ENCODE measurements at regions of chr7 and their contacts with region 1.

Region 1: GRCh38 chr7:101185258-101185839 is 5.3 kb upstream of the NAT16 start:
- DNase-seq: no peak
- H3K4me3 ChIP-seq: no peak overlapping the region
- H3K27ac ChIP-seq: no peak overlapping the region
- H3K4me1 ChIP-seq: peaks cover 8% of the 10 kb centered on the region
- CTCF ChIP-seq: no peak

Region 2: GRCh38 chr7:101169838-101170551 is 15.4 kb before region 1 on chr7:
- CTCF ChIA-PET with region 1: interaction called, 4 read pairs
- POLR2A ChIA-PET with region 1: interaction called, 12 read pairs
- intact Hi-C with region 1: no loop called
- DNase-seq: peak; percentile 69
- H3K4me3 ChIP-seq: no peak overlapping the region
- H3K27ac ChIP-seq: no peak overlapping the region
- H3K4me1 ChIP-seq: peaks cover 26% of the 10 kb centered on the region
- CTCF ChIP-seq: peak; percentile 91

Region 3: DNA sequence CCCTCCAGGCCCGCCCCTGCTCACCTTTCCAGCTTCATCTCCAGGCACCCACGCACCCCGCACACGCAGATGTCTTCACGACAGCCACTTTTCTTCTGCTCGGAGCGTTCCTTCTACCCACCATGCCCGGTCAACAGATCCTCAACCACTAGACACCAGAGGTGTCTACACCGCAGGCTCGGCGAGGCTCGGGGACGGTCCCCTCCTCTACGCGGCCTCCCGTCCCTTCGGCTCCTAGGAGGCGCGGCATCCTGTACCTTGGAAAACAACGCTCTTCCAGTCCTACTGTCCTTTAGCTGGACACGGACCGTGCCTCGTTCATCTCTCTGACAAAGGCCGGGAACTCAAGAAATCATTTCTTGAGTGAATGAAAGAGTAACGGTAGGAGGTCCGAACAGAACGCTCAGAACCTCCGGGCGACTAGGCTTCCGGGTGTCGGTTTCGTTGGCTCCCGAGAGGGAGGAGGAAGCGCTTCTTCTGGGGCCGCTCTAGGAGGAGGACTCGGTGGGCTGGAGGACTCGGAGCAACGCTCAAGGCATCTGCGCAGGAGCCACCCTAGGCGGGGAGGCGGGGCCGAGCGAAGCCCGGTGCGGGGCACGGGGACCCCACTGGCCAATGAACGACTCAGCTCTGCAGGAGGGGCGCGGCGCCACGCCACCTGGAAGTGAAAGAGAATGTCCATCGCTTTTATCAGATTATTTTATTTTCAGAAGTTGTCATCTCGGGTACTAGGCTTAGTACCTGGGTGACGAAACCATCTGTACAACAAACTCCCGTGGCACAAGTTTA is 66.7 kb after region 1 on chr7:
- CTCF ChIA-PET with region 1: no interaction called
- POLR2A ChIA-PET with region 1: no interaction called
- intact Hi-C with region 1: no loop called
- DNase-seq: peak; percentile 98
- H3K4me3 ChIP-seq: peak overlapping the region; percentile 83
- H3K27ac ChIP-seq: peak overlapping the region; percentile 30
- H3K4me1 ChIP-seq: peaks cover 12% of the 10 kb centered on the region
- CTCF ChIP-seq: no peak